Activated B cell treated with CpG ODN at 0.5 μM for 24 hours (primary cell): ENCODE measurements at regions of chr15 and their contacts with region 1.

Region 1: DNA sequence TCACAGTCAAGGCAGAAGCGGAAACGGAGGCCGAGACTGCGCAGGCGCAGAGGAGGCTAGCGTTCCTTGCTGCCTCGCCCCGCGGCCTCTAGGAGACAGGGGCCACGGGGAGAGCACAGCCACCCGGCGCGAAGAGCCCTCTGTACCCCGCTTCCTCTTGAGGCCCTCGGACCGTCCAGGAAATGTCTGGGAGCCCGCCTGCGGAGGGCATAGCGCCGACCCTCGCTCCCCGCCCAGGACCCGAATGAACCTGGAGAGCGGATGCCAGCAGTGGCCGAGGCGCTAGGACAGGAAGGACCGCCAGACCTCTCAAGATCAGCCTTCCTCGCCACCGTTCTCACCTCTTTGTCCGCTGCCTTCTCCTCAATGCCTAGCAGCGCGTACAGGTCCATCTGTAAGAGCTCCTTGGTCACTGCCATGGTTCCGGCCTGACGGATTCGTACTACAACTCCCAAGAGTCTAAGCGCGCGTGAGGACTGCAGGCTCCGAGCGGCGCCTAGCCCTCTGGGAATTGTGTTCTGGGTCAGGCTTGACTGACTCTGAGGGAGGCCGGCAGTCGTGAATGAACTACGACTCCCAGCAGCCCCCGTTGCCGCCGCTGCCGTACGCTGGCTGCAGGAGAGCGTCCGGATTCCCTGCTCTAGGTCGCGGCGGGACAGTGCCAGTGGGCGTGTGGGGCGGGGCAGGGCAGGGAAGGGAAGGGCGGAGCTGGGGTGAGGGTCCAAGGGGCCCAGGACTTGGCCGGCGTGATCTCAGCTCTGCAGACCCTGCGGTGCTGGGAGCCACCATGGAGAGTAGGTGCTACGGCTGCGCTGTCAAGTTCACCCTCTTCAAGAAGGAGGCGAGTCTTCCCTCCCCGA is at the starts of genes DNAJC17 and ZFYVE19:
- DNase-seq: peak; percentile 87
- ATAC-seq: peak; percentile 96
- H3K4me3 Mint-ChIP-seq: peak within 1 kb of the TSS; percentile 99
- H3K27ac Mint-ChIP-seq: peak within 1 kb of the TSS; percentile 100
- H3K4me1 Mint-ChIP-seq: peaks cover 24% of the 10 kb centered on the region
- H3K27me3 Mint-ChIP-seq: no peaks in the 10 kb centered on the region
- CTCF ChIP-seq: no peak
- total RNA-seq, gene DNAJC17: 43.1 and 51.0 TPM in 2 replicates
- total RNA-seq, gene ZFYVE19: 23.2 and 25.2 TPM in 2 replicates

Region 2: GRCh38 chr15:40160689-40161688 is 646.3 kb before region 1 on chr15 and contains the start of gene BUB1B:
- CTCF ChIA-PET with region 1: no interaction called
- POLR2A ChIA-PET with region 1: no interaction called
- intact Hi-C with region 1: loop called (anchors 2 kb)
- DNase-seq: peak; percentile 88
- ATAC-seq: peak; percentile 97
- H3K4me3 Mint-ChIP-seq: no peak within 1 kb of the TSS
- H3K27ac Mint-ChIP-seq: no peak within 1 kb of the TSS
- H3K4me1 Mint-ChIP-seq: peaks cover 10% of the 10 kb centered on the region
- H3K27me3 Mint-ChIP-seq: no peaks in the 10 kb centered on the region
- CTCF ChIP-seq: no peak
- total RNA-seq, gene BUB1B: 3.9 and 4.2 TPM in 2 replicates

Region 3: DNA sequence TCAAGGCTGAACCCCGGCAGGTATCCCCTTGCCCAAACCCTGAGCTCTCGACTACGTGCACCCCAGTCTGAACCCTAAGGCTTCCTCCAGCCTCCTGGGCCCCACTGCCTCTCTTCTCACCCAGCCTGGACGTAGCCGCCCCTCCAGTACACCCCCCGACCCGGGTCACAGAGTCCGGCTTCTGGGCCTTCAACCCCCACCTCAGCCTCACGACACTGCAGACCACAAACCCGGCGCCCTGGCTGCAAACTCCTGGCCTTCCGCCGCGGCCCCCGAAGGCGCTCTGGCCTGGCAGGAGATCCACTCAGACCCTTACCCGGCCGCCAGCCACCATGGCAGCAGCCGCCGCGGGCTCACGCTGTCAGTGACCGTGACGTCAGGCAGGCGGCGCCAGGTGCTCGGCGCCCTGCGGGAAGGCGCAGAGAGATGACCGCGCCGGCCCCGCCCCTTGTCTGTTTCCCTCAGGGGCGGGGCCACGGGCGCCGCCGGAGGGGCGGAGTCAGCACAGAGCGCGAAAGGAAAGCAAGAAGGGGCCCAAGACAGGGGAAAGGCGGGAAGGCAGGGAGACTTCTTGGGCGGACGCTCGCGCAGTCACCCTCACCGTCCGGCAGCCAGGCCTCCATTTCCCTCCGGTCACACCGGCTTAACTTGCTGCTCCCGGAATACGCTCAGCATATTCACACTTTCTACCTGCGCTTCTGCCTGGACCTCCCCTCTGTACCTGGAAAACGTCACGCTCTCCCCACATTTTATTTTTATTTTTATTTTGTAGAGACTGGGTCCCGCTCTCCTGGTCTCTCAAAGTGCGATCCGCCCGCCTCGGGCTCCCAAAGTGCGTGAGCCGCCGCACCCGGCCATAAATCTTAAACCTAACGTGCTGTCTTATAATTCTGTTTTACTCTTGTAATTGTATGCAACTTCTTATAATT is 52.1 kb before region 1 on chr15 and contains the start of gene RMDN3:
- CTCF ChIA-PET with region 1: no interaction called
- POLR2A ChIA-PET with region 1: no interaction called
- intact Hi-C with region 1: loop called (anchors 1 kb)
- DNase-seq: peak; percentile 93
- ATAC-seq: peak; percentile 97
- H3K4me3 Mint-ChIP-seq: peak within 1 kb of the TSS; percentile 90
- H3K27ac Mint-ChIP-seq: peak within 1 kb of the TSS; percentile 91
- H3K4me1 Mint-ChIP-seq: peaks cover 25% of the 10 kb centered on the region
- H3K27me3 Mint-ChIP-seq: no peaks in the 10 kb centered on the region
- CTCF ChIP-seq: no peak
- total RNA-seq, gene RMDN3: 25.5 and 25.6 TPM in 2 replicates

Region 4: DNA sequence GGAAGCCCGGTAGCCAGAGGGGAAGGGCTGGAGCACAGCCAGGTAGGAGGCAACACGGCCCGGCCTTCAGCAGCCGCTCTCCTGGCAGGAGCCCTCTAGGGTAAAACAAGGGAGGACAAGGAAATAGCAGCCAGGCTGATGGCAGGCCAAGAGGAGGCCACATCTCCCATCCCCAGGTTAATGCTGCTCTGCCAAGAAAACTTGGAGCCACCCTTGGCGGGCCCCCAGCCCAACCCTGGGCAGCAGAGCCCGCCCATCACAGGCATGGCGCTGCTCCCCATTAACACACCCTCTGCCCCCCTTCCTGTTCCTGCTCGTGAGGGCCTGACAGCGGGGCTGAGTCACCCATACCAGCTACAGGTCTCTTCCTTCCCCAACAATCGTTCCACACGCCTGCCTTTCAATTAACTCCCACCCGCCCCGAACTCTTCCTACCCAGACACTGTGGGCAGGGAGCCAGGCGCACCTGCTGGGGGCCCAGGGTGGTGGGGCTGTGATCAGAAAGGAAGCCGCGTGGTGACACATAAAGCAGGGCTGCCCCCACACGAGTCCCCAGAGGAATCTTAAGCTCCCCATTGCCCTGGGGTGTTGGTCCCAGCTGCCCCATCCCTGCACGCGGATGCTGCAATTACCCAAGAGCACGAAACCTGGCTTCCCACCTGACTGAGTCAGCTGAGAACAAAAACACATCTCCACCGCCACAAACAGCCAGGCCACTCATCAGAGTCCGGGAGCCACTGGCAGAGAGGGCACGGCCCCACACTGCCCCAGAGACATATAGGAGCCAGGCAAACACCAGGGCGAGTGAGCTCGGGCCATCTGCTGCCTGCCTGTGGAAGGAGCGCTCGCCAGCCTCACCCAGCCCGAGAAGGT is 37.7 kb before region 1 on chr15 and contains the start of gene C15orf62:
- CTCF ChIA-PET with region 1: no interaction called
- POLR2A ChIA-PET with region 1: interaction called, 17 read pairs
- intact Hi-C with region 1: loop called (anchors 1 kb)
- DNase-seq: peak; percentile 81
- ATAC-seq: peak; percentile 84
- H3K4me3 Mint-ChIP-seq: peak within 1 kb of the TSS; percentile 82
- H3K27ac Mint-ChIP-seq: peak within 1 kb of the TSS; percentile 93
- H3K4me1 Mint-ChIP-seq: peaks cover 59% of the 10 kb centered on the region
- H3K27me3 Mint-ChIP-seq: no peaks in the 10 kb centered on the region
- CTCF ChIP-seq: no peak
- total RNA-seq, gene C15orf62: 5.7 and 6.5 TPM in 2 replicates

Region 5: GRCh38 chr15:40847205-40847961 is 40.1 kb after region 1 on chr15:
- CTCF ChIA-PET with region 1: no interaction called
- POLR2A ChIA-PET with region 1: interaction called, 3 read pairs
- intact Hi-C with region 1: loop called (anchors 1 kb)
- DNase-seq: no peak
- ATAC-seq: peak; percentile 53
- H3K4me3 Mint-ChIP-seq: peak overlapping the region; percentile 38
- H3K27ac Mint-ChIP-seq: peak overlapping the region; percentile 64
- H3K4me1 Mint-ChIP-seq: peaks cover 39% of the 10 kb centered on the region
- H3K27me3 Mint-ChIP-seq: no peaks in the 10 kb centered on the region
- CTCF ChIP-seq: no peak